Activated CD4-positive, alpha-beta T cell treated with anti-CD3 and anti-CD28 coated beads, Interleukin-2, amount 10 ng/mL, durations not matched to agents 24 days and 14 days (primary cell): ENCODE measurements at regions of chr5 and their contacts with region 1.

Region 1: GRCh38 chr5:150560401-150561193 is 52.7 kb downstream of the NDST1 start:
- DNase-seq: peak; percentile 95
- H3K4me3 Mint-ChIP-seq: no peak overlapping the region
- H3K27ac Mint-ChIP-seq: no peak overlapping the region
- H3K4me1 Mint-ChIP-seq: no peaks in the 10 kb centered on the region
- H3K27me3 Mint-ChIP-seq: peaks cover 5% of the 10 kb centered on the region

Region 2: GRCh38 chr5:150458819-150459557 is 101.6 kb before region 1 on chr5:
- intact Hi-C with region 1: loop called (anchors 5 kb)
- DNase-seq: peak; percentile 96
- H3K4me3 Mint-ChIP-seq: peak overlapping the region; percentile 44
- H3K27ac Mint-ChIP-seq: peak overlapping the region; percentile 10
- H3K4me1 Mint-ChIP-seq: peaks cover 27% of the 10 kb centered on the region
- H3K27me3 Mint-ChIP-seq: no peaks in the 10 kb centered on the region

Region 3: GRCh38 chr5:150656191-150657132 is 95.9 kb after region 1 on chr5:
- intact Hi-C with region 1: loop called (anchors 1 kb)
- DNase-seq: peak; percentile 95
- H3K4me3 Mint-ChIP-seq: peak overlapping the region; percentile 80
- H3K27ac Mint-ChIP-seq: peak overlapping the region; percentile 68
- H3K4me1 Mint-ChIP-seq: peaks cover 10% of the 10 kb centered on the region
- H3K27me3 Mint-ChIP-seq: peaks cover 24% of the 10 kb centered on the region

Region 4: GRCh38 chr5:150801117-150801927 is 240.7 kb after region 1 on chr5:
- intact Hi-C with region 1: loop called (anchors 5 kb)
- DNase-seq: peak; percentile 77
- H3K4me3 Mint-ChIP-seq: no peak overlapping the region
- H3K27ac Mint-ChIP-seq: peak overlapping the region; percentile 68
- H3K4me1 Mint-ChIP-seq: peaks cover 17% of the 10 kb centered on the region
- H3K27me3 Mint-ChIP-seq: peaks cover 8% of the 10 kb centered on the region

Region 5: GRCh38 chr5:150989695-150990094 is 429.1 kb after region 1 on chr5:
- intact Hi-C with region 1: loop called (anchors 10 kb)
- DNase-seq: peak; percentile 59
- H3K4me3 Mint-ChIP-seq: no peak overlapping the region
- H3K27ac Mint-ChIP-seq: no peak overlapping the region
- H3K4me1 Mint-ChIP-seq: no peaks in the 10 kb centered on the region
- H3K27me3 Mint-ChIP-seq: no peaks in the 10 kb centered on the region